Posterior vena cava (tissue), 2 donors: ENCODE measurements at regions of chr10 and their contacts with region 1.

Region 1: GRCh38 chr10:14459665-14460064 is 128.9 kb upstream of the FRMD4A start:
- DNase-seq: no peak

Region 2: GRCh38 chr10:13698217-13698616 is 761.4 kb before region 1 on chr10:
- intact Hi-C with region 1: loop called in 1 of 2 experiments (anchors 5 kb)
- DNase-seq: no peak